ENCODE measurements at regions of chr1 and their contacts with region 1.

Region 1: GRCh38 chr1:156456622-156457465 is 43.7 kb downstream of the MEF2D start:
- DNase-seq: peak; percentile 88 to 99 (median 96)
- ATAC-seq: peak; percentile 91
- H3K4me3 ChIP-seq: peak overlapping the region; percentile 87
- H3K4me3 Mint-ChIP-seq: peak overlapping the region; percentile 91 to 97 (median 94)
- H3K27ac ChIP-seq: peak overlapping the region; percentile 97
- H3K27ac Mint-ChIP-seq: peak overlapping the region; percentile 96 to 100 (median 99)
- H3K4me1 ChIP-seq: peaks cover 4 to 6% of the 10 kb centered on the region in 2 donors
- H3K4me1 Mint-ChIP-seq: peaks cover 4 to 23% (median 11%) of the 10 kb centered on the region in 7 donors
- H3K27me3 ChIP-seq: no peaks in the 10 kb centered on the region
- H3K27me3 Mint-ChIP-seq: peaks cover 0 to 10% (median 0%) of the 10 kb centered on the region in 5 donors

Region 2: DNA sequence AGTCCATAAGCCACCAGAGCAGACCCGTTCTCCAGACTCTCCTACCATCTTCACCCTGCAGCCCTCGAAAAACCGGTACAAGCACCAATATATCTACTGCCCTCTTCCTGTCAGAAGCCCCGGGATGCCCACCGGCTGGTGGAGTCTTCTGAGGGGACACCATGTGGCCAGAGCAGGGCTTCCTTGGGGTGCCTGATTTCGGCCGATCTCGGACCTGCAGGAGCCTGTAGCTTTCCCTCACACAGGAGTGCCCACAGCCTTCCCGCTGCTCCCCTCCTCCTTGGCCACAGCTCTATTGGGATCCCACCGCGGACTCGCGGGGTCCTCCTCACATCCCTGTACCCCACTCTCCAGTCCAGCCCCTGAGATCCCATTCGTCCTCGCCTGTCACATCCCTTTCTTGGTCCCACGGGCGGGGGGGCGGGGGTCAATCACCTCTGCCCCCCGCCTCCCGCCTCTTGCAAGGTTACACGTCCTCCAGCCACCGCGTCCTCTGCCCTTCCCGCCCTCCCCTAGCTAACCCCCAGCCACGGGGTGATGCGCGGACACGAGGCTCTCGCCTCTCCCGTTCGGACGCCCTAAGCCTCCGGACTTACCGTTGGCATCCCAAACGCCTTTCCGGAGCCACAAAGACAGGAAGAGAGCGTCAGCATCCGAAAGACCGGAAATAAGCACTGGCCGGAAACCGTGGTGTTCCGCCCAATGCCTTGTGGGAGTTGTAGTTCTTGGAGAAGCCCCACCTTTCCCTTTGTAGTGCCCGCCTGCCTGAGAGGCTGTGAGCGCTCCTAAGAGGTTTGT is 436.4 kb before region 1 on chr1 and contains the start of gene SSR2:
- CTCF ChIA-PET with region 1: no interaction called
- POLR2A ChIA-PET with region 1: no interaction called
- intact Hi-C with region 1: loop called in 1 of 2 experiments (anchors 2 kb)
- DNase-seq: peak; percentile 44 to 91 (median 84)
- ATAC-seq: peak; percentile 99
- H3K4me3 ChIP-seq: peak within 1 kb of the TSS; percentile 87
- H3K4me3 Mint-ChIP-seq: peak within 1 kb of the TSS; percentile 87 to 99 (median 96)
- H3K27ac ChIP-seq: peak within 1 kb of the TSS; percentile 74
- H3K27ac Mint-ChIP-seq: peak within 1 kb of the TSS; percentile 89 to 99 (median 95)
- H3K4me1 ChIP-seq: peaks cover 4 to 9% of the 10 kb centered on the region in 2 donors
- H3K4me1 Mint-ChIP-seq: peaks cover 20 to 47% (median 41%) of the 10 kb centered on the region in 7 donors
- H3K27me3 ChIP-seq: no peaks in the 10 kb centered on the region
- H3K27me3 Mint-ChIP-seq: peaks cover 0 to 12% (median 0%) of the 10 kb centered on the region in 5 donors
- total RNA-seq, gene SSR2: 207 to 278 (median 256) TPM

Region 3: GRCh38 chr1:156445789-156446263 is 11.0 kb before region 1 on chr1:
- CTCF ChIA-PET with region 1: interaction called, 8 read pairs
- POLR2A ChIA-PET with region 1: interaction called, 7 read pairs
- intact Hi-C with region 1: loop called in 1 of 2 experiments (anchors 1 kb)
- DNase-seq: peak; percentile 60 to 83 (median 74)
- ATAC-seq: peak; percentile 92
- H3K4me3 ChIP-seq: no peak overlapping the region
- H3K4me3 Mint-ChIP-seq: peak overlapping the region in 4 of 10 donors; percentile 8 to 26 (median 13)
- H3K27ac ChIP-seq: no peak overlapping the region
- H3K27ac Mint-ChIP-seq: peak overlapping the region in 2 of 9 donors; percentile 10 to 48
- H3K4me1 ChIP-seq: peaks cover 0 to 6% of the 10 kb centered on the region in 2 donors
- H3K4me1 Mint-ChIP-seq: peaks cover 0 to 9% (median 8%) of the 10 kb centered on the region in 7 donors
- H3K27me3 ChIP-seq: peaks cover 10 to 11% of the 10 kb centered on the region in 2 donors
- H3K27me3 Mint-ChIP-seq: peaks cover 39 to 60% (median 45%) of the 10 kb centered on the region in 5 donors

Region 4: DNA sequence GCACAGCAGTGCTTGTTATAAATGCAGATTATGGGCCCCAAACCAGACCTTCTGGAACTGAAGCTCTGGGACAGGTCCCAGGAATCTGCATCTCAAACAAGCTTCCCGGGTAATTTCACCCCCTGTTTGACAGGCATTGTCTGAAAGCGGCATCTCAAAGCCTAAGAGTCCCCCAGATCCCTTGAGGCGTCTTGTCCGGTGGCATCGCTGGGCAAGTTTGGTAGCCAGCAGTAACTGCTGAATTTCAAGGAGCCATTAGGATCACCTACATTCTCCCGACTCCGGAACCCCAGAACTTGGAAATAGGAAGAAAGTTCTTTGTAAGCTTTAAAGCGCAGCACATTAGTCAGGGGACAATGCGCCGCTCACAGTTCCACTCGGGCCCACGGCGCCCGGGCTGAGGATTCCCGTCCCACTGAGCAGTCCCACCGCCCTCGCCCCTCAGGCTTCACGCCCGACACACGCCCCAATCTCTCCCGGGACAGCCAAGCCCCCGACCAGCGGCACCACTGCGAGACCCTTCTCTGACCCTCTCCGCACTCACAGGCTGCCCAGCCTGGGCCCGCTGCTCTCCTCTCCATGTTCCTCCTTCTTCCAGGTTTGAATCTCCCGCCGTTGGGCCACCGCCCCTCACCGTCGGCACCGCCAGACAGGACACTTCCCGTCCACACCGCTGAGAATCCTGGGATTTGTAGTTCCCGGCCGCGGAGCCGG is 115.3 kb after region 1 on chr1 and contains the start of gene IQGAP3:
- CTCF ChIA-PET with region 1: no interaction called
- POLR2A ChIA-PET with region 1: no interaction called
- intact Hi-C with region 1: loop called (anchors 1 to 2 kb)
- DNase-seq: peak; percentile 49 to 74 (median 63)
- ATAC-seq: peak; percentile 93
- H3K4me3 ChIP-seq: peak within 1 kb of the TSS; percentile 41
- H3K4me3 Mint-ChIP-seq: peak within 1 kb of the TSS; percentile 69 to 94 (median 84)
- H3K27ac ChIP-seq: no peak within 1 kb of the TSS
- H3K27ac Mint-ChIP-seq: peak within 1 kb of the TSS in 5 of 9 donors; percentile 38 to 84 (median 59)
- H3K4me1 ChIP-seq: peaks cover 4 to 9% of the 10 kb centered on the region in 2 donors
- H3K4me1 Mint-ChIP-seq: peaks cover 10 to 27% (median 19%) of the 10 kb centered on the region in 7 donors
- H3K27me3 ChIP-seq: peaks cover 0 to 16% of the 10 kb centered on the region in 2 donors
- H3K27me3 Mint-ChIP-seq: peaks cover 16 to 41% (median 32%) of the 10 kb centered on the region in 5 donors
- total RNA-seq, gene IQGAP3: 0.24 to 14.4 TPM in 2 of 5 experiments, not detected in the others

Region 5: GRCh38 chr1:156591432-156592157 is 134.8 kb after region 1 on chr1 and contains the start of gene NAXE:
- CTCF ChIA-PET with region 1: interaction called, 4 read pairs
- POLR2A ChIA-PET with region 1: interaction called, 13 read pairs
- intact Hi-C with region 1: loop called in 1 of 2 experiments (anchors 1 kb)
- DNase-seq: peak; percentile 54 to 81 (median 65)
- ATAC-seq: peak; percentile 97
- H3K4me3 ChIP-seq: peak within 1 kb of the TSS; percentile 69
- H3K4me3 Mint-ChIP-seq: peak within 1 kb of the TSS; percentile 82 to 93 (median 89)
- H3K27ac ChIP-seq: peak within 1 kb of the TSS; percentile 89
- H3K27ac Mint-ChIP-seq: peak within 1 kb of the TSS; percentile 86 to 98 (median 93)
- H3K4me1 ChIP-seq: peaks cover 8 to 12% of the 10 kb centered on the region in 2 donors
- H3K4me1 Mint-ChIP-seq: peaks cover 16 to 32% (median 28%) of the 10 kb centered on the region in 7 donors
- H3K27me3 ChIP-seq: no peaks in the 10 kb centered on the region
- H3K27me3 Mint-ChIP-seq: no peaks in the 10 kb centered on the region
- total RNA-seq, gene NAXE: 25.6 to 58.8 (median 40.7) TPM

Region 6: DNA sequence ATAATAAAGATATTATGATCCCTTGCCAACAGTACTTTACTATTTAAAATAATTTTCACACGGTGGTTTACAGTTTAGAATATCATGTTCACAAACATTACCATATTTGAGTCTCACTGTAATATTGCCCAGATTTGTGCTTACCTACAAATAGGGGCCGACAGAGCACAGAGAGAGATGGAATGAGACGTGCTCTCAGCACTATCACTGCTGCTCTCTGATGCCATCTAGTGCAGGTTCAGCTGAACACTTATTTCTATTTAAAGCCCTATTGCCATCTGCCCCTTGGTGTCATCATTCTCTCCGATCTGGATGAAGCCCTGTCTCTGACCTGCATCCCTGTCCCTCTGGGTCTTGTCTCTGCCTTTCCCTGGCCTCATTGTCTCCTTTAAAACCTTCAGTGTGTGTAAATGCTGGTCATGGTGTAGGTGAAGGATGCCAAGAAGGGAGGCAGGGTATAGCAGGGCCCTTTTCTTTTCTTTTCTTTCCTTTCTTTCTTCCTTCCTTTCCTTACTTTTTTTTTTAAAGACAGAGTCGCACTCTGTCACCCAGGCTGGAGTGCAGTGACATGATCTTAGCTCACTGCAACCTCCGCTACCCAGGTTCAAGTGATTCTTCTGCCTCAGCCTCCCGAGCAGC is 151.3 kb after region 1 on chr1:
- CTCF ChIA-PET with region 1: interaction called, 14 read pairs
- POLR2A ChIA-PET with region 1: interaction called, 3 read pairs
- intact Hi-C with region 1: loop called (anchors 1 kb)
- DNase-seq: peak in 7 of 9 donors; percentile 55 to 79 (median 72)
- ATAC-seq: peak; percentile 97
- H3K4me3 ChIP-seq: no peak overlapping the region
- H3K4me3 Mint-ChIP-seq: no peak overlapping the region
- H3K27ac ChIP-seq: no peak overlapping the region
- H3K27ac Mint-ChIP-seq: no peak overlapping the region
- H3K4me1 ChIP-seq: peaks cover 0 to 4% of the 10 kb centered on the region in 2 donors
- H3K4me1 Mint-ChIP-seq: peaks cover 0 to 12% (median 6%) of the 10 kb centered on the region in 7 donors
- H3K27me3 ChIP-seq: no peaks in the 10 kb centered on the region
- H3K27me3 Mint-ChIP-seq: peaks cover 0 to 27% (median 14%) of the 10 kb centered on the region in 5 donors

Region 7: GRCh38 chr1:156740679-156741612 is 284.1 kb after region 1 on chr1 and contains the start of gene MRPL24:
- CTCF ChIA-PET with region 1: no interaction called
- POLR2A ChIA-PET with region 1: interaction called, 4 read pairs
- intact Hi-C with region 1: loop called in 1 of 2 experiments (anchors 1 kb)
- DNase-seq: peak; percentile 84 to 99 (median 98)
- ATAC-seq: peak; percentile 95
- H3K4me3 ChIP-seq: peak within 1 kb of the TSS; percentile 79
- H3K4me3 Mint-ChIP-seq: peak within 1 kb of the TSS; percentile 94 to 99 (median 98)
- H3K27ac ChIP-seq: peak within 1 kb of the TSS; percentile 90
- H3K27ac Mint-ChIP-seq: peak within 1 kb of the TSS; percentile 86 to 99 (median 98)
- H3K4me1 ChIP-seq: peaks cover 17 to 20% of the 10 kb centered on the region in 2 donors
- H3K4me1 Mint-ChIP-seq: peaks cover 23 to 50% (median 40%) of the 10 kb centered on the region in 7 donors
- H3K27me3 ChIP-seq: no peaks in the 10 kb centered on the region
- H3K27me3 Mint-ChIP-seq: no peaks in the 10 kb centered on the region
- total RNA-seq, gene MRPL24: 19.1 to 68.9 (median 47.2) TPM